ENCODE measurements at regions of chr9 and their contacts with region 1.

Region 1: GRCh38 chr9:33446946-33447798 is at the start of gene AQP3:
- DNase-seq: peak; percentile 84
- H3K4me3 Mint-ChIP-seq: peak within 1 kb of the TSS; percentile 89
- H3K27ac Mint-ChIP-seq: peak within 1 kb of the TSS; percentile 94
- H3K4me1 Mint-ChIP-seq: peaks cover 50% of the 10 kb centered on the region
- H3K27me3 Mint-ChIP-seq: no peaks in the 10 kb centered on the region
- total RNA-seq, gene AQP3: 19.4 to 20.2 TPM

Region 2: GRCh38 chr9:33159760-33160127 is 287.4 kb before region 1 on chr9:
- CTCF ChIA-PET with region 1: no interaction called
- POLR2A ChIA-PET with region 1: no interaction called
- intact Hi-C with region 1: loop called (anchors 5 kb)
- DNase-seq: peak; percentile 85
- H3K4me3 Mint-ChIP-seq: peak overlapping the region; percentile 66
- H3K27ac Mint-ChIP-seq: peak overlapping the region; percentile 97
- H3K4me1 Mint-ChIP-seq: peaks cover 94% of the 10 kb centered on the region
- H3K27me3 Mint-ChIP-seq: no peaks in the 10 kb centered on the region

Region 3: GRCh38 chr9:33458444-33458843 is 11.3 kb after region 1 on chr9:
- CTCF ChIA-PET with region 1: interaction called, 386 read pairs
- POLR2A ChIA-PET with region 1: interaction called, 7 read pairs
- intact Hi-C with region 1: loop called (anchors 1 kb)
- DNase-seq: peak; percentile 84
- H3K4me3 Mint-ChIP-seq: peak overlapping the region; percentile 13
- H3K27ac Mint-ChIP-seq: peak overlapping the region; percentile 89
- H3K4me1 Mint-ChIP-seq: peaks cover 58% of the 10 kb centered on the region
- H3K27me3 Mint-ChIP-seq: no peaks in the 10 kb centered on the region

Region 4: DNA sequence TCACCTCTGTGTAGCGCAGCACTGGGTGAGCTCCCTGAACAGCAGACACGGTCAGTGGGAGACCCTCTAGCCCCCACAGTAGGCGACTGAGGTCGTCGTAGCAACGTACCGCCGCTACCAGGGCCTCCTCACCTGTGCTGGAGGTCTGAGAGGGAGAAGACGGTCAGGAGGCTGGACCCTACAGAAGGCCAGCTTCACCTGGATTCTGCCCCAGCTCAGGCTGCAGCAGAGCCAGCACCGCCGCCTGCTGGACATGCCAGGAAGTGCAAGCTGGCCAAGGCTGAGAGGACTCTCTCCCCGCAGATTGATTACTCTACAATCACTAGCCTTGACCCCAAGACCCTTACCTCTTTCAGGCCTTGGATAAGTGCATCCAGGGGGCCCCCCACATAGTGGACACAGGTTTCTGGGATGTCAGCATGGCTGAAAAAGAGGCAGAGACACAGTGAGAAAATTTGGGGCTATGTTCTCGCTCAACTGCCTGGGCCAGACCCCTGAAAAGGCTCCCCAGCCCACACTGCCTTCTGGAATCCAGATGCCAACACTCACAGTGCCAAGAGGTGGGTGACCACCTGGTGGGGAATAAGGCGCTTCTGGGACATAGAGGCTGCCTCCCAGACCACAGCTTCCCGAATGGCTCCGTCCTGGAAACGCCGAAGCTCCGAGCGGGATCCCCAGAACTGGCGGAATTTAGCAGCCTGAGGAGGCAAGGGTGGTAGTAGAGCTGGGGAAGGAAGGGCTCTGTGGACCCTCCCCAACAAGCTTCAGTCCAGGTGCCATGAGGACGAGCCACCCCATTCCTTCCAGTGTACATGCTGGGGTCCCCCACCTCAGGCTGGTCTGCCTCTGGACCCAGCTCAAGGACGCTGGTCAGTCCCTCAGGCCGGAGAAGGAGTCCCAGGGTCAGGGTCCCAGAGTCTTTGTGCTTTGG is 19.7 kb after region 1 on chr9:
- CTCF ChIA-PET with region 1: interaction called, 386 read pairs
- POLR2A ChIA-PET with region 1: interaction called, 10 read pairs
- intact Hi-C with region 1: no loop called
- DNase-seq: peak; percentile 80
- H3K4me3 Mint-ChIP-seq: no peak overlapping the region
- H3K27ac Mint-ChIP-seq: no peak overlapping the region
- H3K4me1 Mint-ChIP-seq: peaks cover 5% of the 10 kb centered on the region
- H3K27me3 Mint-ChIP-seq: no peaks in the 10 kb centered on the region

Region 5: DNA sequence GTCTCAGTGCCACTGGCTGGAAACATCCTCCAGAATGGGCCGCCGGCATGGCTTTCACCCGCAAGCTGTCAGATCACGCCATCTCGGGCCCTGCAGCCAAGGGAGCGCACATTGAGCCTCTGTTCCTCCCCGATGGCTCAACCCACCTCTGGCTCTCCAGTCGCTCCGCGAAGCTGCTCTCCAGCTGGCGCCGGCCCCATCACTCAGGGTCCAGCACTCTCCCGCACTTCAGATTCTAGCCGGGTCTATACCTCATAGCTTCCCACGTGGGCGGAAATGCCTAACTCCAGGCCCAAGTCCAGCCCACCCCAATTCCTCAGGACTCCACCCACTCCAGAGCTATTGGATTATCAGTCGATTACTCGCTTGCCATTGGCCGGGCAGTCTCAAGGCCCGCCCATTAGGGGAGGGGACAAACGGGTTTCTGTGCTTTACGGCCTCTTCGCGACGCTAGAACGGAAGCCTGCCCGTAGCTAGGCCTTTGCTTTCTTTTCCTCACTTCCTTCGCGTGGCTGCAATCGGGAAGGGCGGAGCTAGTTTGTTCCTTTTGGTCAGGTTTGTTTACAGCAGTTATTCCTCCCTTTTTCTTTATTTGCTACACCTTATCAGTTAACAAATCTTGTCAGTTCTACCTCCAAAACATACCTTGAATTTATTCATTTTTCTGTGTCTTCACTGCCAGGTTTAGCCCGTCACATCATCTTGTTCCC is 26.6 kb after region 1 on chr9 and contains the start of gene NOL6:
- CTCF ChIA-PET with region 1: interaction called, 386 read pairs
- POLR2A ChIA-PET with region 1: interaction called, 9 read pairs
- intact Hi-C with region 1: loop called (anchors 1 kb)
- DNase-seq: peak; percentile 99
- H3K4me3 Mint-ChIP-seq: peak within 1 kb of the TSS; percentile 99
- H3K27ac Mint-ChIP-seq: peak within 1 kb of the TSS; percentile 93
- H3K4me1 Mint-ChIP-seq: peaks cover 24% of the 10 kb centered on the region
- H3K27me3 Mint-ChIP-seq: no peaks in the 10 kb centered on the region
- total RNA-seq, gene NOL6: 38.1 to 39.7 TPM